ENCODE measurements at regions of chr1 and their contacts with region 1.

Region 1: DNA sequence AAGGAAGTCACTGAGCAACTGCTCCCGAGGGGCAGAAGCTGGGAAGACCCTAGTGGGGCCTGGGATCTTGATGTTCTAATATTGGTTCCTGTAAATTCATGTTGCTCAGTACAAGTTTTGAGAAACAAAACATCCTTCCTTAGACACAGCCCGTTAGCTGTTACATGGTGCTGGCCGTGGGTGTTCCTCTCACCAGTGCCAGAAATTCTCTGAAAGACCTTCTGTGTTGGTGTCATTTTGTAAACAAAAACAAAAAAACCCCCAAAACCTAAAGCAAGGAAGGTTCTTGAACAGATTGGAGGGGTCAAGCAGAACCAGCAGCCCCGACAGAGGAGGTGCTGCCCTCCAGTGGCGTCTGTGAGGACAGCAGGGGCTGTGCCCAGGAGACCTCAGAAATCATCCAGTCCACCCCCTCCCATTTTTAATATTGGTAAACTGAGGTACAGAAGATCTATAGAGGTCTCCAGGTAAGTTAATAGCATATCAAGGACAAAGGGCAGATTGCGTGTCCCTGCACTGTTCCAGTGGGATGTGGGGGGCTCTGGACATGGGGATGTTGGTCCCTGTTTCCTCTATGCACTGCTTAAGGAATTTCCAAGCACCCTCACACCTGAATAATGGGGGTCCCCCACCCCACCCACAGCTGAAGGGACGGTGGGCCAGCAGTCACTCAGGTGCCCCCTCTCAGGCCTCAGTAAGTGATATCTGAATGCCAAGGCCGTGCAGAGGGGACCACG is 38.2 kb downstream of the SLC2A7 start:
- DNase-seq: peak in 3 of 6 donors; percentile 53 to 84 (median 53)
- ATAC-seq: peak in 3 of 4 donors; percentile 76 to 82 (median 78)
- H3K4me3 ChIP-seq: no peak overlapping the region
- H3K27ac ChIP-seq: no peak overlapping the region
- H3K4me1 ChIP-seq: peaks cover 0 to 3% (median 0%) of the 10 kb centered on the region in 3 donors
- H3K27me3 ChIP-seq: no peaks in the 10 kb centered on the region
- CTCF ChIP-seq: peak; percentile 83 to 93 (median 86)

Region 2: GRCh38 chr1:8922962-8923361 is 65.1 kb before region 1 on chr1:
- intact Hi-C with region 1: loop called in 1 of 3 experiments (anchors 5 kb)
- DNase-seq: no peak
- ATAC-seq: no peak
- H3K4me3 ChIP-seq: no peak overlapping the region
- H3K27ac ChIP-seq: no peak overlapping the region
- H3K4me1 ChIP-seq: no peaks in the 10 kb centered on the region
- H3K27me3 ChIP-seq: no peaks in the 10 kb centered on the region
- CTCF ChIP-seq: no peak